Thyroid gland (tissue), 4 donors: ENCODE measurements at regions of chr14 and their contacts with region 1.

Region 1: GRCh38 chr14:89425931-89426330 is 8.9 kb upstream of the FOXN3 start:
- DNase-seq: peak in 1 of 2 donors; percentile 8
- H3K4me3 ChIP-seq: no peak overlapping the region
- H3K27ac ChIP-seq: no peak overlapping the region
- H3K4me1 ChIP-seq: peaks cover 28 to 47% of the 10 kb centered on the region in 2 donors
- H3K27me3 ChIP-seq: no peaks in the 10 kb centered on the region
- CTCF ChIP-seq: no peak
- POLR2A ChIP-seq: no peak

Region 2: DNA sequence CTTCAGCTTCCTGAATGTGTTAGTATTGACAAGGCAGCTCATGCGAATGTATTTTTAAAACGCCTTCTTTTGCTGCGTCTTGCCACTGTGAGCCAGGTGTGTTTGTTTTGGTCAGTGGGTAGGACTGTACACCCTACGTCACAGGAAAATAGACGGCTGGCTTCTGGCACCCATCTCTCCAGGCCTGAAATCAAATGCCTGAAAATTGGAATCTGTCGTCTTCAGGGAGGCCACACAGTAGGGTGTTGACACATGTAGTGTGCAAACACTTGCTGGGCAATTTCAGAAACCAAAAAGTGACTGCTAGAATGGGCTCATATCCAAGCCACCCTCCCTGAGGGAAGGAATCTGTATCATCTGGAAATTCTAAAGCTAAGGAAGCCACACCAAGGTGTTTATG is 392.2 kb before region 1 on chr14:
- intact Hi-C with region 1: loop called (anchors 10 kb)
- DNase-seq: no peak
- H3K4me3 ChIP-seq: no peak overlapping the region
- H3K27ac ChIP-seq: no peak overlapping the region
- H3K4me1 ChIP-seq: no peaks in the 10 kb centered on the region
- H3K27me3 ChIP-seq: no peaks in the 10 kb centered on the region
- CTCF ChIP-seq: no peak
- POLR2A ChIP-seq: no peak

Region 3: GRCh38 chr14:89330236-89331002 is 95.5 kb before region 1 on chr14:
- intact Hi-C with region 1: no loop called
- DNase-seq: no peak
- H3K4me3 ChIP-seq: no peak overlapping the region
- H3K27ac ChIP-seq: no peak overlapping the region
- H3K4me1 ChIP-seq: no peaks in the 10 kb centered on the region
- H3K27me3 ChIP-seq: no peaks in the 10 kb centered on the region
- CTCF ChIP-seq: no peak
- POLR2A ChIP-seq: no peak

Region 4: DNA sequence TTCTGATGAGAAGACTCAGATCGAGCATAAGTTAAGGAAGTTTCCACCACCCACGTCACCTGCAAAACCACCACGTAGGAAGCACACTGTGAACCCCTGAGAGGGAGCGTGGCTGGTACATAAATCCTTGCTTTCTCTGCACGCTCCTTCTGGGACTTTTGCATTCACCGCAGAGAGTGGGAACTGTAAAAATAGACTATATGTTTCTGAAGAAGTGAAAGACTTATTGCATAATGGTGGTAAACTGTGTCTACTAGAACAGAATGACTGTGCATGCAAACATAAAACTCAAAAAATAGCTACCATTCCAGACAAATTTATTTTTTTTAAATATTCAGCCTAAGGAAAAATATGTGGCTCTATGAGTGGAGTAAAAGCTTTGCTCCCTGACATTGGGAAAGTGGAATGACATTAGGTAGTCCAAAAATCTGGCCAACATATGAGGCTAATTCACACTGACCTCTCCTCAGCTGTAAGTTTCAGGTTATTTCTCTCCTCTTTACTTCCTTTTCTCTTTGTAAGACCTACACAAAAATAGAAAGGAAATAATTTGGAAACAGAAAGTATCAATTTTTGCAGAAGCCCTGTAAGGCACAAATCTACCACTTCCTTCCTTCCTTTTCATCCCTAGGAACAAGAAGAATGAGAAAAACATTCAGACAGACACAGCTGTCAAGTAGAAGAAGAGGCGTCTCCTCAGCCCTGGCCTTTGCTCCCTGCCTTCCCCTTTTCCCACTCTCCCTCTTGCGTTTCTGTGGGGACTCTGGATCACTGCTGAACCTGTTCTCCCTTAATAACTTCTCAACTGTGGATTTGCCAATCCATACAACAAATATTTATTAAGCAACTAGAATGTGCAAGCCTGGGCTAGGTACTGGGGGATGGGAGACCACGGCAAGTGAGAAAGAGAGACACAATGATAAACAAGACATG is 255.4 kb after region 1 on chr14:
- intact Hi-C with region 1: loop called (anchors 10 kb)
- DNase-seq: no peak
- H3K4me3 ChIP-seq: no peak overlapping the region
- H3K27ac ChIP-seq: no peak overlapping the region
- H3K4me1 ChIP-seq: no peaks in the 10 kb centered on the region
- H3K27me3 ChIP-seq: no peaks in the 10 kb centered on the region
- CTCF ChIP-seq: no peak
- POLR2A ChIP-seq: no peak